ENCODE measurements at regions of chr3 and their contacts with region 1.

Region 1: GRCh38 chr3:129942296-129942695 is 32.2 kb upstream of the TRH start:
- DNase-seq: peak; percentile 36
- H3K4me3 ChIP-seq: no peak overlapping the region
- H3K27ac ChIP-seq: no peak overlapping the region
- H3K4me1 ChIP-seq: peaks cover 0 to 4% (median 0%) of the 10 kb centered on the region in 4 donors
- H3K27me3 ChIP-seq: no peaks in the 10 kb centered on the region
- CTCF ChIP-seq: peak; percentile 58 to 80 (median 68)
- EP300 ChIP-seq: no peak
- POLR2A ChIP-seq: no peak

Region 2: GRCh38 chr3:129490242-129491045 is 451.9 kb before region 1 on chr3:
- in situ Hi-C with region 1: loop called in 2 of 4 experiments (anchors 25 kb)
- intact Hi-C with region 1: loop called (anchors 10 kb)
- DNase-seq: peak; percentile 74
- H3K4me3 ChIP-seq: no peak overlapping the region
- H3K27ac ChIP-seq: peak overlapping the region; percentile 65 to 72 (median 69)
- H3K4me1 ChIP-seq: peaks cover 0 to 17% (median 6%) of the 10 kb centered on the region in 4 donors
- H3K27me3 ChIP-seq: no peaks in the 10 kb centered on the region
- CTCF ChIP-seq: peak; percentile 77 to 85 (median 78)
- EP300 ChIP-seq: no peak
- POLR2A ChIP-seq: no peak

Region 3: GRCh38 chr3:129627429-129628168 is 314.7 kb before region 1 on chr3:
- in situ Hi-C with region 1: loop called in 3 of 4 experiments (anchors 5 to 25 kb)
- intact Hi-C with region 1: loop called (anchors 10 kb)
- DNase-seq: peak; percentile 75
- H3K4me3 ChIP-seq: peak overlapping the region; percentile 50 to 77 (median 70)
- H3K27ac ChIP-seq: peak overlapping the region; percentile 95 to 100 (median 99)
- H3K4me1 ChIP-seq: peaks cover 28 to 58% (median 44%) of the 10 kb centered on the region in 4 donors
- H3K27me3 ChIP-seq: no peaks in the 10 kb centered on the region
- CTCF ChIP-seq: peak; percentile 68 to 90 (median 77)
- EP300 ChIP-seq: no peak
- POLR2A ChIP-seq: peak; percentile 13

Region 4: GRCh38 chr3:129994883-129995559 is 52.7 kb after region 1 on chr3:
- in situ Hi-C with region 1: no loop called
- intact Hi-C with region 1: loop called (anchors 2 kb)
- DNase-seq: no peak
- H3K4me3 ChIP-seq: no peak overlapping the region
- H3K27ac ChIP-seq: no peak overlapping the region
- H3K4me1 ChIP-seq: no peaks in the 10 kb centered on the region
- H3K27me3 ChIP-seq: no peaks in the 10 kb centered on the region
- CTCF ChIP-seq: no peak
- EP300 ChIP-seq: no peak
- POLR2A ChIP-seq: no peak

Region 5: GRCh38 chr3:130081351-130081881 is 139.1 kb after region 1 on chr3 and contains the start of gene ALG1L2:
- in situ Hi-C with region 1: no loop called
- intact Hi-C with region 1: no loop called
- DNase-seq: no peak
- H3K4me3 ChIP-seq: no peak within 1 kb of the TSS
- H3K27ac ChIP-seq: no peak within 1 kb of the TSS
- H3K4me1 ChIP-seq: no peaks in the 10 kb centered on the region
- H3K27me3 ChIP-seq: no peaks in the 10 kb centered on the region
- CTCF ChIP-seq: no peak
- EP300 ChIP-seq: no peak
- POLR2A ChIP-seq: no peak
- total RNA-seq, gene ALG1L2: not detected

Region 6: DNA sequence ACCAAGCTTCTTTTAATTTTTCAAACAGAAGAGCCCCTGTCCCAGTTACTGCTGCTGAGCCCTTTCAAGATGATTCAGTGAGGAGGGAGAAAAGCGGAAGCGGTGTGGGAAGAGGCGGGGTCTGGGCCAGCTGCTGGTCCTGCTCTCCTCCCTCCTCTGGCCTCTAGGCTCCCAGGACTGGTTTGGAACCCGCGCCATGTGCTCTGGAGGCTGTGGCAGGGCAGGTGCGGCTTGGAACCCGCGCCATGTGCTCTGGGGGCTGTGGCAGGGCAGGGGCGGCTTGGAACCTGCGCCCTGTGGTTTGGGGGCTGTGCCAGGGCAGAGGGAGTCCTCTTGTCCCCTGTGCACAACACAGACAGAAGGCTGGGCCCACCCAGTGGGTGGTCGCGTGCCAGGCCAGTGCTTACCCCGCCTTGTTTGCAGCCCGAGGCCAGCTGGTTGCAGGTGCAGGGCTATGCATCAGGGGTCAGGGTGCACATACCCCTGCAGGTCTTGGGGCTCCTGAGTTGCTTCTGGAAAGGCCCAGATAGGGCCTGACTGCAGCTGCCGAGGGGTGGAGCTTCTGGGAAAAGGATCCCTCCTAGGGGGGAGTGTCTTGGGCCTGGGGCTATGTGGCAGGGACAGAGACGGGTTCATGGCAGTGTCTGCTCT is 151.6 kb after region 1 on chr3:
- in situ Hi-C with region 1: loop called in 1 of 4 experiments (anchors 10 kb)
- intact Hi-C with region 1: no loop called
- DNase-seq: peak; percentile 57
- H3K4me3 ChIP-seq: peak overlapping the region in 2 of 4 donors; percentile 17 to 35
- H3K27ac ChIP-seq: peak overlapping the region; percentile 71 to 89 (median 77)
- H3K4me1 ChIP-seq: peaks cover 0 to 20% (median 9%) of the 10 kb centered on the region in 4 donors
- H3K27me3 ChIP-seq: no peaks in the 10 kb centered on the region
- CTCF ChIP-seq: no peak
- EP300 ChIP-seq: no peak
- POLR2A ChIP-seq: no peak